ENCODE measurements at regions of chr17 and their contacts with region 1.

Region 1: DNA sequence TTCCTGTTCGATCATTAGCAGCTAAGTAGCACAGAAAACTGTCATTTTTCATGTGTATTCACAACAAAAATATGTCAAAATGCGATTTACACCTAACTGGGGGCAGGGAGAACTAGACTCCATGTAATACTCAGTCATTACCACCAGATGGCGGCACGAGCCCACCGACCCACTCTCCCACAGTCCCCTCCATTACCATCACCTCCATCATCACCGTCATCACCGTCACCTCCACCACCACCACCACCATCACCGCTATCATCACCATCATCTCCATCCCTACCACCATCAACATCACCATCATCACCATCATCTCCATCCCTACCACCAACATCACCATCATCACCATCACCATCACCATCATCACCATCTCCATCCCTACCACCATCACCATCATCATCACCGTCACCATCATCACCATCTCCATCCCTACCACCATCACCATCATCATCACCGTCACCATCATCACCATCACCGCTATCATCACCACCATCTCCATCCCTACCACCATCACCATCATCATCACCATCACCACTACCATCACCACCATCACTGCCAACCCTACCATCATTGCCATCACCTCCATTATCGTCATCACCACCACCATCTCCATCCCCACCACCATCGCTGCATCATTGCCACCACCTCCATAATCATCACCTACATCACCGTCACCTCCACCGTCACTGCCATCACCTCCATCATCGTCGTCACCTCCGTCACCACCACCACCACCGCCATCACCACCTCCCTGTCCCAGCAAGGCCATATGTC is 14.4 kb downstream of the NDUFAF8 start:
- DNase-seq: no peak
- ATAC-seq: peak; percentile 63
- H3K4me3 ChIP-seq: no peak overlapping the region
- H3K27ac ChIP-seq: no peak overlapping the region
- H3K4me1 ChIP-seq: no peaks in the 10 kb centered on the region
- H3K27me3 ChIP-seq: no peaks in the 10 kb centered on the region

Region 2: DNA sequence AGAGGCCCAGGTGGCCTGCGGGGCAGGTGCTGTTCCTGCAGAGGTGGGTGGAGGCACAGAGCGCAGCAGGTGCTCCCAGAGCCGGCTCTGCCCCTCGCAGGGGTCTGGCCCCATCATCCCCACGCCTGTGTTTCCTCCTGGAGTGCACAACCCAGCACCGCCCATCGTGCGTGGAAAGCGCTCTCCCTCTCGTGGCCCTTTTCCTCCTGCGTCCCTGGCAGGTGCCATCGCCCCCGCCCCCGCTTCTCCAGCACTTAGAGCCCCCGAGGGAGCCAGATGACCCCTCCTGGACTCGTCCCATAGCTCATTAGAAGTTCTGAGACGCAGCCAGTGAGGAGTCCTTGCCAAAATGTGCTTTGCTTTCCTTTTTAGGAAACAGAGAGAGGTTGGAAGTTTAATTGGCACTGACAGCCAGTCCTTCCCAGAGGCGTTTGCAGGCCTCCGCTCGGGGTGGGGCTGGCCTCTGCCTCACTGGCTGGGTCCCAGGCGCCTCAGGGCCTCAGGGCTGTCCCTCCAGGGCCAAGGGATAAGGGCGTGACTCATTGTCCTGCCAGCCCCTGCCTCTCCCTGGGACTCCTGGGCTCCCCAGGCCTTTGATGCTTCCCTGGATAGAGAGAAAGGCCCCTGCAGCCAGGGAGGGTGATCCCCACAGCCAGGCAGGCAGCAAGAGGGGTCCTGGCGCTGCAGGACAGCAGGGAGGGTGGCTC is 294.1 kb before region 1 on chr17:
- intact Hi-C with region 1: no loop called
- DNase-seq: peak; percentile 93 to 96
- ATAC-seq: peak; percentile 90
- H3K4me3 ChIP-seq: no peak overlapping the region
- H3K27ac ChIP-seq: peak overlapping the region in 1 of 2 donors; percentile 97
- H3K4me1 ChIP-seq: no peaks in the 10 kb centered on the region
- H3K27me3 ChIP-seq: no peaks in the 10 kb centered on the region

Region 3: GRCh38 chr17:81339534-81340296 is 86.2 kb after region 1 on chr17:
- intact Hi-C with region 1: loop called in 1 of 2 experiments (anchors 5 kb)
- DNase-seq: no peak
- ATAC-seq: no peak
- H3K4me3 ChIP-seq: no peak overlapping the region
- H3K27ac ChIP-seq: no peak overlapping the region
- H3K4me1 ChIP-seq: no peaks in the 10 kb centered on the region
- H3K27me3 ChIP-seq: no peaks in the 10 kb centered on the region

Region 4: GRCh38 chr17:81387100-81388090 is 133.8 kb after region 1 on chr17:
- intact Hi-C with region 1: loop called in 1 of 2 experiments (anchors 5 kb)
- DNase-seq: peak; percentile 76 to 89
- ATAC-seq: peak; percentile 42
- H3K4me3 ChIP-seq: peak overlapping the region; percentile 69 to 73
- H3K27ac ChIP-seq: peak overlapping the region in 1 of 2 donors; percentile 77
- H3K4me1 ChIP-seq: no peaks in the 10 kb centered on the region
- H3K27me3 ChIP-seq: no peaks in the 10 kb centered on the region

Region 5: GRCh38 chr17:81484195-81484979 is 230.8 kb after region 1 on chr17:
- intact Hi-C with region 1: loop called (anchors 1 to 5 kb)
- DNase-seq: peak; percentile 93 to 96
- ATAC-seq: peak; percentile 89
- H3K4me3 ChIP-seq: no peak overlapping the region
- H3K27ac ChIP-seq: no peak overlapping the region
- H3K4me1 ChIP-seq: no peaks in the 10 kb centered on the region
- H3K27me3 ChIP-seq: peaks cover 0 to 2% of the 10 kb centered on the region in 2 donors

Region 6: GRCh38 chr17:81537343-81537855 is 283.9 kb after region 1 on chr17:
- intact Hi-C with region 1: loop called (anchors 5 kb)
- DNase-seq: no peak
- ATAC-seq: no peak
- H3K4me3 ChIP-seq: no peak overlapping the region
- H3K27ac ChIP-seq: no peak overlapping the region
- H3K4me1 ChIP-seq: no peaks in the 10 kb centered on the region
- H3K27me3 ChIP-seq: no peaks in the 10 kb centered on the region

Region 7: GRCh38 chr17:81601525-81602120 is 348.1 kb after region 1 on chr17:
- intact Hi-C with region 1: loop called (anchors 5 kb)
- DNase-seq: peak in 1 of 2 donors; percentile 41
- ATAC-seq: peak; percentile 82
- H3K4me3 ChIP-seq: no peak overlapping the region
- H3K27ac ChIP-seq: no peak overlapping the region
- H3K4me1 ChIP-seq: no peaks in the 10 kb centered on the region
- H3K27me3 ChIP-seq: no peaks in the 10 kb centered on the region

Region 8: DNA sequence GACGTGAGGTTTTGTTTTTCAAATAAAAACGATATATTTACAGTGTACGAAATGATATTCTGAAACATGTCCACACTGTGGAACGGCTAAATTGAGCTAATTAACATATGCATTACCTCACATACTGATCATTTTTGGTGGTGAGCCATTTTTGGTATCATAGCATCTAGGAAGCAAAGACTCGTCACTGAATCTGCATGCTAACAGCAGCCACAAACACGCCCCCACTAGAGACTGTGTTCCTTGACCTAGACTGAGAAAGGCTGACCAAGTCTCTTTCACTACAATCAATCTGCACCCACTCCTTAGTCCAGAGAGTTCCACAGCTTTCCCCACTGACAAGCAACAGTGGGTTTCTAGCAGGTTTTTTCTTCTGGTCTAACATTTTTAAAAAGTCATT is 353.9 kb after region 1 on chr17:
- intact Hi-C with region 1: loop called (anchors 5 kb)
- DNase-seq: no peak
- ATAC-seq: no peak
- H3K4me3 ChIP-seq: no peak overlapping the region
- H3K27ac ChIP-seq: no peak overlapping the region
- H3K4me1 ChIP-seq: no peaks in the 10 kb centered on the region
- H3K27me3 ChIP-seq: no peaks in the 10 kb centered on the region

Measured in aorta (tissue), 5 donors.